Calu3 (cell line): ENCODE measurements at regions of chr13 and their contacts with region 1.

Region 1: GRCh38 chr13:73708393-73708985 is 425.7 kb downstream of the KLF12 start:
- DNase-seq: peak; percentile 34
- H3K4me3 Mint-ChIP-seq: no peak overlapping the region
- H3K27ac Mint-ChIP-seq: no peak overlapping the region
- H3K4me1 Mint-ChIP-seq: peaks cover 12% of the 10 kb centered on the region
- H3K27me3 Mint-ChIP-seq: no peaks in the 10 kb centered on the region
- CTCF ChIP-seq: peak; percentile 32

Region 2: DNA sequence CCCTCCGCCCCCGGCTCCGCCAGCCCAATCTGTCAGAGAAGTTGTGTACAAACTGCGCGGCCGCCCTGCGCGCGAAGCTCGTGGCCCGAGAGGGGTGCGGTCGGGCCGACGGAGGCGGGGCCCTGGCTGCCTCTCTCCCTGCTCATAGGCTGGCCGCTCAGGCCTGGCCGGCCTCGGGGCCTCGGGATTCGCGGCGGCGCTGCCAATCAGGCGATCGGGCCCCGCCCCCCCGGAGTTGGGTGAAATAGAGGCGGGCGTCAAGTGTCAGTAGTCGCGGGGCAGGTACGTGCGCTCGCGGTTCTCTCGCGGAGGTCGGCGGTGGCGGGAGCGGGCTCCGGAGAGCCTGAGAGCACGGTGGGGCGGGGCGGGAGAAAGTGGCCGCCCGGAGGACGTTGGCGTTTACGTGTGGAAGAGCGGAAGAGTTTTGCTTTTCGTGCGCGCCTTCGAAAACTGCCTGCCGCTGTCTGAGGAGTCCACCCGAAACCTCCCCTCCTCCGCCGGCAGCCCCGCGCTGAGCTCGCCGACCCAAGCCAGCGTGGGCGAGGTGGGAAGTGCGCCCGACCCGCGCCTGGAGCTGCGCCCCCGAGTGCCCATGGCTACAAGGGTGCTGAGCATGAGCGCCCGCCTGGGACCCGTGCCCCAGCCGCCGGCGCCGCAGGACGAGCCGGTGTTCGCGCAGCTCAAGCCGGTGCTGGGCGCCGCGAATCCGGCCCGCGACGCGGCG is 649.6 kb before region 1 on chr13 and contains the start of gene KLF5:
- CTCF ChIA-PET with region 1: no interaction called
- intact Hi-C with region 1: loop called (anchors 10 kb)
- DNase-seq: peak; percentile 92
- H3K4me3 Mint-ChIP-seq: peak within 1 kb of the TSS; percentile 87
- H3K27ac Mint-ChIP-seq: peak within 1 kb of the TSS; percentile 87
- H3K4me1 Mint-ChIP-seq: peaks cover 8% of the 10 kb centered on the region
- H3K27me3 Mint-ChIP-seq: no peaks in the 10 kb centered on the region
- CTCF ChIP-seq: no peak
- total RNA-seq, gene KLF5: 121 and 136 TPM in 2 replicates

Region 3: GRCh38 chr13:73335221-73335620 is 373.3 kb before region 1 on chr13:
- CTCF ChIA-PET with region 1: no interaction called
- intact Hi-C with region 1: loop called (anchors 2 kb)
- DNase-seq: no peak
- H3K4me3 Mint-ChIP-seq: peak overlapping the region; percentile 43
- H3K27ac Mint-ChIP-seq: peak overlapping the region; percentile 97
- H3K4me1 Mint-ChIP-seq: no peaks in the 10 kb centered on the region
- H3K27me3 Mint-ChIP-seq: no peaks in the 10 kb centered on the region
- CTCF ChIP-seq: no peak

Region 4: GRCh38 chr13:73544175-73544574 is 164.3 kb before region 1 on chr13:
- CTCF ChIA-PET with region 1: no interaction called
- intact Hi-C with region 1: loop called (anchors 10 kb)
- DNase-seq: no peak
- H3K4me3 Mint-ChIP-seq: no peak overlapping the region
- H3K27ac Mint-ChIP-seq: no peak overlapping the region
- H3K4me1 Mint-ChIP-seq: no peaks in the 10 kb centered on the region
- H3K27me3 Mint-ChIP-seq: no peaks in the 10 kb centered on the region
- CTCF ChIP-seq: no peak

Region 5: GRCh38 chr13:73684286-73684685 is 24.2 kb before region 1 on chr13:
- CTCF ChIA-PET with region 1: no interaction called
- intact Hi-C with region 1: no loop called
- DNase-seq: no peak
- H3K4me3 Mint-ChIP-seq: no peak overlapping the region
- H3K27ac Mint-ChIP-seq: no peak overlapping the region
- H3K4me1 Mint-ChIP-seq: no peaks in the 10 kb centered on the region
- H3K27me3 Mint-ChIP-seq: no peaks in the 10 kb centered on the region
- CTCF ChIP-seq: no peak